HAP-1 (cell line): ENCODE measurements at regions of chr2 and their contacts with region 1.

Region 1: GRCh38 chr2:227871375-227871788 is at the start of gene DAW1:
- DNase-seq: no peak
- H3K4me3 ChIP-seq: no peak within 1 kb of the TSS
- H3K4me1 ChIP-seq: peaks cover 3% of the 10 kb centered on the region; the same call in 1 of the 2 replicates
- H3K27me3 ChIP-seq: peaks cover 2% of the 10 kb centered on the region; the same call in 1 of the 2 replicates

Region 2: GRCh38 chr2:227406177-227407031 is 465.0 kb before region 1 on chr2:
- in situ Hi-C with region 1: loop called (anchors 10 kb)
- DNase-seq: peak; percentile 81 to 99
- H3K4me3 ChIP-seq: no peak overlapping the region
- H3K4me1 ChIP-seq: peaks cover 11% of the 10 kb centered on the region
- H3K27me3 ChIP-seq: no peaks in the 10 kb centered on the region

Region 3: DNA sequence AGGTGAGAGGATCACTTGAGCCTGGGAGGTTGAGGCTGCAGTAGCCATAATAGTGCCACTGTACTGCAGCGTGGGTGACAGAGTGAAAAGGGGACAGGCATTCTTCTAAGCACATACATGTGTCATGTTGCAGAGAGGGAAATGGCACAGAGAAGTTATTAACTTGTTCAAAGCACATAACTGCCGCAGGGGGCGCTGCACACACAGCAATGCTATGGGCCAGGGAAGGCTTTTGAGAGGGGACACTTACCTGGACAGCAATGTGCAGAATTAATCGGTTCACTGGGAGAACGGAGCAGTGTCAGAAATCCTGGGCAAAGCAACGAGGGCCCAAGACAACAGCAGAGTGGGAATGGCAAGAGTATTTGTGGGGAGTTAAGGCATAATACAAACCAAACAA is 123.3 kb before region 1 on chr2:
- in situ Hi-C with region 1: no loop called
- DNase-seq: peak; percentile 24 to 78
- H3K4me3 ChIP-seq: no peak overlapping the region
- H3K4me1 ChIP-seq: no peaks in the 10 kb centered on the region
- H3K27me3 ChIP-seq: no peaks in the 10 kb centered on the region